Activated naive CD4-positive, alpha-beta T cell treated with anti-CD3 and anti-CD28 coated beads for 36 hours (primary cell): ENCODE measurements at regions of chr15 and their contacts with region 1.

Region 1: DNA sequence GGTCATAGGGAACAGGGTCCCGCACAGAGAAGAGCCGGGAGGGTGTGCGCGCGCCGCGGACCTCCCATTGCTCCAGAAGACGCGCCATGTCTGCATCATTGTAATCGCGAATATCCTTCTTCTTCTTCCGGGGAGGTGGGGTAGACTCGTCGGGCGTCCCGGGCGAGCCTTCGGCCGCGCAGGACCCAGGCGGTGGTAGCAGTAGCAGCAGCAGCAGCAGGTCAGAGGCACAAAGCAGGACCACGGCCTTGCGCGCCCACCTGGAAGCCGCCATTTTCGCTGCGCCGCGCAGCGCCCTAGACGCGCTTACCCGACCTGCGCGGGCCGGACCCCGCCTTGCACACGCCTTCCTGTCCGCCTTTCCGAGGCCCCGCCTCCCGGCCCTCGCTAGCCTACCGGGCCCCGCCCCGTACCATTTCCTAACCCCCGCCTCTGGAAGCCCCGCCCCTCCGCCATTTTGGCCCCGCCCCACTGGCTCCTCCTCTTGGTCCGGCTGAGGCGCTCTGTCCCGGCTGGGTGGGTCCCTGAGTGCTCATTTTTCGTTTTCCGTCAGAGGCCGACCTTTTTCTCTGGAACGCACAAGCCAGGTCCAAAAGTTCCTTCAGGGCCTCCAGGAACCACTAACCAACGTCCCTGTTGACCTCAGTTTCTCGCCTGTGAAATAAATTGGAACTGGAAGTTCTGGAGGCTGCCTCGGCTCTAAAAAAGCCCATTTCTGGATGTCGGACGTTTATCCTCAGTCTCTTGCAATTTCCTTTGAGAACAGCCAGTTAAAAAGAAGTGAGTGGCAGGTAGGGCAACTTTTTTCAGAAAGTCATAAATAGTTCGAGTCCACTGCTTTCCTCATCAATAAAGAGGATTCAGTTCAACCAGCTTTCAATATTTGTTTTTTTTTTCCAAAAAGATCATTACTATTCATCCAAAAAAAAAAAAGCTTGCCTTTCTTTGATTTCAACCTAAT is at the start of gene MESD:
- DNase-seq: peak; percentile 99
- H3K4me3 Mint-ChIP-seq: peak within 1 kb of the TSS; percentile 99
- H3K27ac Mint-ChIP-seq: peak within 1 kb of the TSS; percentile 97
- H3K4me1 Mint-ChIP-seq: peaks cover 57% of the 10 kb centered on the region
- H3K27me3 Mint-ChIP-seq: no peaks in the 10 kb centered on the region
- total RNA-seq, gene MESD: 12.5 to 15.1 TPM

Region 2: GRCh38 chr15:80152180-80152845 is 837.5 kb before region 1 on chr15:
- CTCF ChIA-PET with region 1: no interaction called
- intact Hi-C with region 1: loop called (anchors 10 kb)
- DNase-seq: peak; percentile 96
- H3K4me3 Mint-ChIP-seq: peak overlapping the region; percentile 87
- H3K27ac Mint-ChIP-seq: peak overlapping the region; percentile 36
- H3K4me1 Mint-ChIP-seq: peaks cover 19% of the 10 kb centered on the region
- H3K27me3 Mint-ChIP-seq: no peaks in the 10 kb centered on the region

Region 3: DNA sequence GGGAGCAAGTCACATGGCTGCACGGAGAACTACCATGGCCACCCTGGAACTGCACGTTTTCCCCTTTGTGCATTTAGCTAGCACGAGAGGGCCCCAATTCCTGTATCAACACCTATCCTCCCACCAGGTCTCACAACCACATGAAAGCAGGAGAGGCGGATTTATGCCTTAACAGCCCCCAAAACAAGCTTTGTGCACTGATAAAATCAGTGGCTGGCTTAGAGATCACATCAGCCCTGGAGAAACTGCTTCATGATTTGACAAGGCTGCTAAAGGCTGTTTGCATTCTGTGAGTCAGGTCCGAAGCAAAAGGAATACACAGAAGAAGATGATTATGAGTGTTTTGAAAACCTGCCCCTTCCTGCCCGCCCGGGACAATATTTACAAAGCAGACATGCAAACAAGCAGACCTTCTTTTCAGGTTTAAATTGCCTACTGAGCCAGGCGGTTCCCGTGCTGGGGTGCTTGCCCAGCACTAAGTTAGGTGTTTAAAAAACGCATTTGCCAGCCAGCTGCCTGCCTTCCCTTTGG is 184.8 kb before region 1 on chr15:
- CTCF ChIA-PET with region 1: no interaction called
- intact Hi-C with region 1: loop called (anchors 2 kb)
- DNase-seq: peak; percentile 42
- H3K4me3 Mint-ChIP-seq: no peak overlapping the region
- H3K27ac Mint-ChIP-seq: no peak overlapping the region
- H3K4me1 Mint-ChIP-seq: peaks cover 24% of the 10 kb centered on the region
- H3K27me3 Mint-ChIP-seq: no peaks in the 10 kb centered on the region

Region 4: GRCh38 chr15:80970018-80970658 is 19.7 kb before region 1 on chr15:
- CTCF ChIA-PET with region 1: interaction called, 7 read pairs
- intact Hi-C with region 1: loop called (anchors 2 kb)
- DNase-seq: peak; percentile 76
- H3K4me3 Mint-ChIP-seq: no peak overlapping the region
- H3K27ac Mint-ChIP-seq: no peak overlapping the region
- H3K4me1 Mint-ChIP-seq: peaks cover 8% of the 10 kb centered on the region
- H3K27me3 Mint-ChIP-seq: no peaks in the 10 kb centered on the region

Region 5: DNA sequence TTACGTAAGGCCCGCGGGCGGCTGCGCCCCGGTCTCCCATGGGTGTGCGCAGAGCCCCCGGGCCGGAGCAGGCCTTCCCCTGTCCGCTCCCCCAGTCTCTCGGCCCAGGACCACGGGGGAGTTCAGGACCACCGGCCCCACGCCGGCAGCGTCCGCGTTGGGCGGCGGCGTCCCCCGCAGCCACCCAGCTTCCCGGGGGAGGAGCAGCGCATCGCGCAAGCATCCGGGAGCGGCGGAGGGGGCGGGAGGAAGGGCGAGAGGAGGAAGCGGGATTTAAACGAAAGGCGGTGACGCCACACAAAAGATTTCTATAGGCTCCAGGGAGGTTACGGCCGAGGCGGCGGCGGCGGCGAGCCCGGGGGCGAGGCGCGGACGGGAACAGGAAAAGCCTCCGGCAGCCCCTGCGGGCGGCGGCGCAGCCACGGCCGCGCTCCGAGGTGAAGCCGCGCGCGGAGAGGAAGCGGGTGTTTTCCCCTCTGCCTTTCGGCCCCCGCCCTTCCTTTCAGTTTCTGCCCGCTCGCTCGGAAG is 10.9 kb after region 1 on chr15 and contains the start of gene TLNRD1:
- CTCF ChIA-PET with region 1: no interaction called
- intact Hi-C with region 1: loop called (anchors 1 kb)
- DNase-seq: peak; percentile 92
- H3K4me3 Mint-ChIP-seq: peak within 1 kb of the TSS; percentile 86
- H3K27ac Mint-ChIP-seq: peak within 1 kb of the TSS; percentile 94
- H3K4me1 Mint-ChIP-seq: peaks cover 40% of the 10 kb centered on the region
- H3K27me3 Mint-ChIP-seq: no peaks in the 10 kb centered on the region
- total RNA-seq, gene TLNRD1: 15.9 to 16.6 TPM